ENCODE measurements at regions of chr6 and their contacts with region 1.

Region 1: DNA sequence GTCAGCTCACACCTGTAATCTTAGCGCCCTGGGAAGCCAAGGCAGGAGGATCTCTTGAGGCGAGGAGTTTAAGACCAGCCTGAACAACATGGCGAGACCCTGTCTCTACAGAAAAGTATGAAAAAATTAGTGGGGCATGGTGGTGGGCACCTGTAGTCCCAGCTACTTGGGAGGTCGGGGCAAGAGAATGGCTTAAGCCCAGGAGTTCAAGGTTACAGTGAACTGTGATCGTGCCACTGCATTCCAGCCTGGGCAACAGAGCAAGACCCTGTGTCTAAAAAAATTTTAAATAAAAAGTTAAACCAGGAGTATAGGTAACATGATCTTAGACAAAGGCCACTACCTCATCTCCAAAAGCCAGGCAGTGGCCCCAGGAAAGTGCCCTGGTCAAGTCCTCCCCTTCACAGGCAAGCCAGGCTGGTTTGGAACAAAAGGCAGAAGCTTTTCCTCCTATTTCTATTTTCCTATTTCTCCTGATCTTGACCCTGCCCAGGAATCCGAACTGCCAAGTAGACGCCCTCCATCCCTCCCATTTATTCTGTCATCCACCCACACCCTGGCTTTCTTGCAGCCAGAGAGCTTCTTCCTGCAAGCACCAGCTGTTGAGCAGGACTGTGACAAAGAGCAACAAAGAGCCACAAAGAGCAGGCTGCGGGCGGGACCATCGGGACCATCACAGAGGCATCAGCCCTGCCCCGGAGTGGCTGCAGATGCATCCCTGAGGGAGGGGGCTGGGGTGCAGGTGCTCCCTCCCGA is 149.9 kb upstream of the AFDN start:
- DNase-seq: peak; percentile 47
- H3K4me3 ChIP-seq: no peak overlapping the region
- H3K27ac ChIP-seq: no peak overlapping the region
- H3K4me1 ChIP-seq: peaks cover 22% of the 10 kb centered on the region
- H3K27me3 ChIP-seq: peaks cover 0 to 4% of the 10 kb centered on the region in 2 experiments
- CTCF ChIP-seq: no peak
- POLR2A ChIP-seq: no peak

Region 2: DNA sequence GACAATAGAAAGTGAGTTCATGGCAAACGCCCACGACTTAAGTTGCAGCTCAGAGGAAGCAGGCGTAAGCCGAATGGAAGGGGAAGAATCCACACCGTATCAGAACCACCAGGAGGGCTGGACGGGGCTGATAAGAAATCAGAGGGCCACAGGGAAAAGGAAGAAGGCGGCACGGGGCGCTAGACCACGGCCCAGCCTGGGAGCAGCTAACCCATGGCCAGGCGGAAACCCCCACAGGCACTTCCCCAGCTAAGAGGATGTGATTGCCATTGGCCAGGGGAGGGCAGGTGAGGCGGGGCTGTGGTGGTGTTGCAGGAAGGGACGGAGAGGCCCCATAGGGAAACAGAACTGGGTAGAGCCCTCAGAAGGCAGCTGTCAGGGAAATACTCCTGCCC is 24.1 kb before region 1 on chr6:
- CTCF ChIA-PET with region 1: no interaction called
- POLR2A ChIA-PET with region 1: interaction called, 3 read pairs
- dilution Hi-C with region 1: no loop called
- intact Hi-C with region 1: loop called (anchors 1 kb)
- DNase-seq: peak; percentile 82
- H3K4me3 ChIP-seq: no peak overlapping the region
- H3K27ac ChIP-seq: no peak overlapping the region
- H3K4me1 ChIP-seq: peaks cover 8% of the 10 kb centered on the region
- H3K27me3 ChIP-seq: no peaks in the 10 kb centered on the region
- CTCF ChIP-seq: no peak
- POLR2A ChIP-seq: no peak

Region 3: DNA sequence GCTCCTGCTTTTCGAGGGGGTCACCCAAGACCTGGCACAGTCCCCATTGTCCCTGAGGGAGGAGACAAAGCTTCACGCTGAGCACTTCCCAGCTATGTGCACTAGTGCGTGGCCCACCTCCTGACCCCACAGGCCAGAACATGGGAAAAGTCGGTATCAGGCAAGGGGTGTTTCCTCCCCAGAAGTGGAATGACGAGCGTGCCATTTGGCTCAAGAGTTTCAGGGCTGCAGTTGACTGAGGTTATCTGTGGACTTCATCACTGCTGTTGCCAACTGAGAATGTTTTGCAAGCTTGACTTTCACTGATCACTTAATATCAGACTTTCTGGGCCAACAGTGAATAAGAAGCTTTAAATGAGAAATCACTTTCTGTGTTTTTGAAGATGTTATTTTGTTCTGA is 12.9 kb after region 1 on chr6:
- CTCF ChIA-PET with region 1: no interaction called
- POLR2A ChIA-PET with region 1: no interaction called
- dilution Hi-C with region 1: no loop called
- intact Hi-C with region 1: no loop called
- DNase-seq: no peak
- H3K4me3 ChIP-seq: no peak overlapping the region
- H3K27ac ChIP-seq: no peak overlapping the region
- H3K4me1 ChIP-seq: no peaks in the 10 kb centered on the region
- H3K27me3 ChIP-seq: no peaks in the 10 kb centered on the region
- CTCF ChIP-seq: no peak
- POLR2A ChIP-seq: no peak